ENCODE measurements at regions of chrX and their contacts with region 1.

Region 1: DNA sequence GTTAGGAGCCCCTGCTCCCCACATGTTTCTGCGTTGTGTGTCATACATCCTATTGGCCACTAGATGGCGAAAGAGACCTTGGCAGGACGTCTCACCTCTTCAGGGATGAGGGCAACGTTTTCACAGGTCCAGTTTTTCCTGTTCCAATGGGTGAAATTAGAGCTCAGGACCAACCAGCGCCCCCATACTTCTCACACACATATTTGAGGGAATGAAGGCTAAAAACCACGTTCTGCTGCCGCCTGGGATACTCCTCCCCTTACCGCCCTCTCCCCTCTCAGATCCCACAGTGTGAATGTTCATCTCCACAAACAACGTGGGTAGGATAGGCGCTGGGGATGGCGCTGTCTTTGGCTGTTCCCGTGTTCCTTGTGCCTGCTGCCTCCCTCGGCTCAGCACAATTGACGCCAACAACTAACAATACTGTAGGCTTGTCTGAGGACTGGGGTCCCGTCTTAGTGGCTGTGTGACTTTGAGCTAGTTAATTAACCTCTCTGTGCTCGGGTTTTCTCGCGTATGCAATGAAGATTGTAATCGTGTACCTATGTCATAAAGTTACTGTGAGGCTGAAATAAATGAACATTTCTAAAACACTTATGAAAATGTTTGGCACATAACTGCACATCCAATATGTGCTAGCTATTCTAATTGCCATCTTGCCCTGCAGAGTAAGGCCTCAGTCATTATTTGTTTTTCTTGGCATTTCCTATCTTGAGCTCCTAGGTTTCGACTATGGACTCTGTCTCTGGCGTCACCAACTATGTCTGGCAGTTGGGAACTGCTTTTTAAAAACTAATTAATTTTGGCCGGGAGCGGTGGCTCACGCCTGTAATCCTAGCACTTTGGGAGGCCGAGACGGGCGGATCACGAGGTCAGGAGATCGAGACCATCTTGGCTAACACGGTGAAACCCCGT is 181.3 kb upstream of the STK26 start:
- DNase-seq: peak; percentile 35
- ATAC-seq: peak; percentile 86
- H3K4me3 Mint-ChIP-seq: no peak overlapping the region
- H3K27ac Mint-ChIP-seq: no peak overlapping the region
- H3K4me1 Mint-ChIP-seq: peaks cover 3% of the 10 kb centered on the region
- H3K27me3 Mint-ChIP-seq: no peaks in the 10 kb centered on the region
- CTCF ChIP-seq: peak; percentile 55

Region 2: GRCh38 chrX:131830400-131831184 is 11.2 kb before region 1 on chrX:
- CTCF ChIA-PET with region 1: interaction called, 14 read pairs
- POLR2A ChIA-PET with region 1: interaction called, 4 read pairs
- intact Hi-C with region 1: no loop called
- DNase-seq: peak; percentile 59
- ATAC-seq: peak; percentile 83
- H3K4me3 Mint-ChIP-seq: peak overlapping the region; percentile 74
- H3K27ac Mint-ChIP-seq: peak overlapping the region; percentile 82
- H3K4me1 Mint-ChIP-seq: peaks cover 14% of the 10 kb centered on the region
- H3K27me3 Mint-ChIP-seq: no peaks in the 10 kb centered on the region
- CTCF ChIP-seq: no peak

Region 3: GRCh38 chrX:131854581-131854980 is 12.8 kb after region 1 on chrX:
- CTCF ChIA-PET with region 1: interaction called, 12 read pairs
- POLR2A ChIA-PET with region 1: no interaction called
- intact Hi-C with region 1: no loop called
- DNase-seq: no peak
- ATAC-seq: no peak
- H3K4me3 Mint-ChIP-seq: no peak overlapping the region
- H3K27ac Mint-ChIP-seq: no peak overlapping the region
- H3K4me1 Mint-ChIP-seq: no peaks in the 10 kb centered on the region
- H3K27me3 Mint-ChIP-seq: no peaks in the 10 kb centered on the region
- CTCF ChIP-seq: peak; percentile 22

Region 4: GRCh38 chrX:132071260-132071659 is 229.5 kb after region 1 on chrX:
- CTCF ChIA-PET with region 1: interaction called, 12 read pairs
- POLR2A ChIA-PET with region 1: no interaction called
- intact Hi-C with region 1: no loop called
- DNase-seq: no peak
- ATAC-seq: no peak
- H3K4me3 Mint-ChIP-seq: no peak overlapping the region
- H3K27ac Mint-ChIP-seq: no peak overlapping the region
- H3K4me1 Mint-ChIP-seq: no peaks in the 10 kb centered on the region
- H3K27me3 Mint-ChIP-seq: no peaks in the 10 kb centered on the region
- CTCF ChIP-seq: peak; percentile 31

Region 5: DNA sequence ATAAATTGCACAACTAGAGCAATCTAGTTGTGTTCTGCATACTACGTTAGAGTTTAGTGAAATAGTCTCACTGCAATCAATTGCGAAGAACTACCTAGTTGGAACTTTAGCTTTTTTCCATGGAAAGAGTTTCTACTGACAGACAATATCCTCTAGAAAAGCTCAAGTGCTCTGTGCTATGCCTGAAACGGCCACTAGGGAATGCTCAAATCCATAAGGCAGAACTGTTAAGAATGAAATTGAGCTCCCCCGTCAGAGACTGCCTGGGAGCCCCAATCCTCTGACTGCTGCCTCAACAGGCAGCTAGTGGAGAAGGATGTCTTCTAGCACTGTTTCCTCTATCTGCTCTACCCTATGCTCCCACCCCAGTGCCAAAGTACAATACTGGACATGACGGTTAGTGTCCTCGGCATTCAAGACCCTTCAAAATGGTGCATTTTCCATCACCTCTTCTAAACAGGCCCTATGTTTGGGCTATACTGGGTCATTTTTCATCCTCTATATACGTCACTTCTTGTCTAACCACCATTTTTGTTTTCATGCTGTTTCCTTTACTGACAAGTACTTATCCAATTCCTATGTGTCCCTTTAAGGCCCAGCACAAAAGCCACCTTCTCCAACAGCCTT is 250.8 kb after region 1 on chrX:
- CTCF ChIA-PET with region 1: interaction called, 15 read pairs
- POLR2A ChIA-PET with region 1: no interaction called
- intact Hi-C with region 1: no loop called
- DNase-seq: peak; percentile 74
- ATAC-seq: peak; percentile 94
- H3K4me3 Mint-ChIP-seq: no peak overlapping the region
- H3K27ac Mint-ChIP-seq: no peak overlapping the region
- H3K4me1 Mint-ChIP-seq: peaks cover 6% of the 10 kb centered on the region
- H3K27me3 Mint-ChIP-seq: no peaks in the 10 kb centered on the region
- CTCF ChIP-seq: peak; percentile 69